Right cardiac atrium (tissue), 5 donors: ENCODE measurements at regions of chr3 and their contacts with region 1.

Region 1: GRCh38 chr3:11910971-11911531 is 64.4 kb upstream of the TAMM41 start:
- DNase-seq: peak in 2 of 3 donors; percentile 30 to 74
- ATAC-seq: peak in 1 of 2 donors; percentile 44
- H3K4me3 ChIP-seq: no peak overlapping the region
- H3K27ac ChIP-seq: no peak overlapping the region
- H3K4me1 ChIP-seq: no peaks in the 10 kb centered on the region
- H3K27me3 ChIP-seq: no peaks in the 10 kb centered on the region

Region 2: DNA sequence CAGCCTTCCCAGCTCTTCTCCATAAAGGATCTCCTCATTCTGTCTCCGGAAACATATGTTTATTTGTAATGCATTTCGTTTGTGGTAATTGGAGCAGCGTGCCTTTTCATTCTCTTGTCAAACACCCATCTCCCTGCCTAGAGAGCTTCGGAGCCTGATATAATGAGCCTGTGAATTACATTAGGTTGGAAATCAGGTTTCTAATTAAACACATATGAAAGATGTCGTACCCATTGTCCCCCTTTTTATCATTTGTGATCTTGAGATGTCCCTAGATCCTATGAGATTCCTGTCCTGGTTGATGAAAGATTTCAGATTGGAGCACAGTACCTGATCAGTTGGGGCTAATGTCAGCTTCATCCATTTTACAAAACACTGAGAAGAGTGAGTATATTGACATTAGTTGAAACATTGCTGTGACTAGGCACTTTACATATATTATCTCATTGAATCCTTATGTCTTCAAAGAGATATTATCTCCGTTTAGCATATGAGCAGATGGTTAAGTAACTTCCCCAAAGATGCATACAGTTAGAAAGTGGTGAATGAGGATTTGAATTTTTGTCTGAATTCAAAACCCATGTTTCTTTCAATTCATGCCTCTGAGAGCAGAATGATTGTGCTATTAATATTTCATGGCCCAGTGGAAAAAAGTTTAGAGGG is 116.3 kb after region 1 on chr3:
- intact Hi-C with region 1: no loop called
- DNase-seq: no peak
- ATAC-seq: no peak
- H3K4me3 ChIP-seq: no peak overlapping the region
- H3K27ac ChIP-seq: no peak overlapping the region
- H3K4me1 ChIP-seq: no peaks in the 10 kb centered on the region
- H3K27me3 ChIP-seq: no peaks in the 10 kb centered on the region

Region 3: DNA sequence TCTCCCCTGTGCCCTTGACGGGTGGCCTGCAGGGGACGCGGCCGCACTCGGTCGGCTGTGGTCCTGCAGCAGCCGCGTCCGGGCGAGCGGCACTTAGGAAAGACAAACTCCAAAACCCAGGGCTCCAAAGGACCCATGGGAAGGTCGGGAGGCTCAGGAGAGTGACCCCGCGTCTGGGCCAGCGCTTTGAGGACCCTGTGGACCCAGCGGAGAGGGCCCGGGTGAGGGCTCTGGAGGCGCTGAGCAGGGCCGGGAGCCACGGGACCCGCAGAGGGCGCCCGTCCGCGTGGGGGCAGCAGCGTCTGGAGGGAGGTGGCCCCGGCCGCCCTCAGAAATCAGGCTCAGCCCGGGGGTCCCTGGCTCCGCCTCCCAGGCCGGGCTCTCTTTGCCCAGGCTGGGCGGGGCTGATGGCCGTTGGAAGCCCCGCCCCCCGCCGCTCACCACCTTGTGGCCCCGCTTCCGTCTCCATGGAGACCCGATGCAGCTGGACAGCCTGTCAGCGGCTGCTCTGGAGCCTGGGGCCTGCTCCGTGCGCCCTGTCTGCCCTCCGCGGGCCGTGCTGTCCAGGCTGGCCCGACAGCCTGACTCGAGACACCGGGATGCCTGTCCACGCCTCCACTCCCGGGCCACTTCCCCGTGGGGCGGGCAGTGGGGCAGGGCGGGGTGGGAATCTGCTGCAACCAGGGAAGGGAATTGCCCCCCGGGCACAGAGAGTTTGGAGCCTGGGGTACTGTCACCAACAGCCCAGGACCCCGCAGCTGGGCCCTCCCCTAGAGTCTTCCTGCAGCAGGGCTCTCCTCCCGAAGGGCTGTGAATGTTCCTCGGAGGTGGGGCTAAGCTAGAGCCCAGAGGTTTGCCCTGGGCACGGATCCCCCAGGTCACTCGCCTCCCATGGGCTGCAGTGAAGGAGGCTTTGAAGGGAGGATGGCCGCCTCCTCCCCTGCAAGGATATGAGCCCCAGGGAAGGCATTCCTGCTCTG is 965.1 kb after region 1 on chr3:
- intact Hi-C with region 1: loop called in 1 of 4 experiments (anchors 10 kb)
- DNase-seq: peak; percentile 61 to 86 (median 80)
- ATAC-seq: peak; percentile 80 to 83
- H3K4me3 ChIP-seq: no peak overlapping the region
- H3K27ac ChIP-seq: no peak overlapping the region
- H3K4me1 ChIP-seq: no peaks in the 10 kb centered on the region
- H3K27me3 ChIP-seq: no peaks in the 10 kb centered on the region